ENCODE measurements at regions of chr9 and their contacts with region 1.

Region 1: GRCh38 chr9:123349691-123350480 is 6.1 kb upstream of the CRB2 start:
- DNase-seq: peak; percentile 55
- H3K4me3 Mint-ChIP-seq: no peak overlapping the region
- H3K27ac Mint-ChIP-seq: no peak overlapping the region
- H3K4me1 Mint-ChIP-seq: no peaks in the 10 kb centered on the region
- H3K27me3 Mint-ChIP-seq: peaks cover 12% of the 10 kb centered on the region

Region 2: GRCh38 chr9:122821278-122821943 is 528.5 kb before region 1 on chr9:
- intact Hi-C with region 1: no loop called
- DNase-seq: no peak
- H3K4me3 Mint-ChIP-seq: no peak overlapping the region
- H3K27ac Mint-ChIP-seq: no peak overlapping the region
- H3K4me1 Mint-ChIP-seq: peaks cover 52% of the 10 kb centered on the region
- H3K27me3 Mint-ChIP-seq: no peaks in the 10 kb centered on the region

Region 3: DNA sequence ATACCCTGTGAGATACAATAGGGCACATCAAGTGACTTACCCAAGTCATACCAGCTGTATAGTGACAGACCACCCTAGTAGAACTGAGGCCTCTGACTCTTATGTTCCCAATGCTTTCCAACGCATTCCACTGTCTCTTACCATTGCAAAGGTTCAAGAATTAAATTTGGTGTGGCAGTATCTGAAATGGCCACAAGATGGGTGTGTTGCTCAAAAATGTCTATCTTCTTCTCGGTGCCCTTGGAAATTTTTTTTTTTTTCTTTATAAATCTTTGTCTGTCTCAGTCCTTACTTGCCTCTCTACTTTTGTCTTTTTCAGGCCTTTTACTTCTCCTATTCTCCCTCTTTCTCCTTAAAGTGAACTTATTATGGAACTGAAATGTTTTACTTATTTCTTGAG is 268.1 kb before region 1 on chr9:
- intact Hi-C with region 1: loop called (anchors 1 kb)
- DNase-seq: no peak
- H3K4me3 Mint-ChIP-seq: no peak overlapping the region
- H3K27ac Mint-ChIP-seq: no peak overlapping the region
- H3K4me1 Mint-ChIP-seq: no peaks in the 10 kb centered on the region
- H3K27me3 Mint-ChIP-seq: no peaks in the 10 kb centered on the region

Region 4: DNA sequence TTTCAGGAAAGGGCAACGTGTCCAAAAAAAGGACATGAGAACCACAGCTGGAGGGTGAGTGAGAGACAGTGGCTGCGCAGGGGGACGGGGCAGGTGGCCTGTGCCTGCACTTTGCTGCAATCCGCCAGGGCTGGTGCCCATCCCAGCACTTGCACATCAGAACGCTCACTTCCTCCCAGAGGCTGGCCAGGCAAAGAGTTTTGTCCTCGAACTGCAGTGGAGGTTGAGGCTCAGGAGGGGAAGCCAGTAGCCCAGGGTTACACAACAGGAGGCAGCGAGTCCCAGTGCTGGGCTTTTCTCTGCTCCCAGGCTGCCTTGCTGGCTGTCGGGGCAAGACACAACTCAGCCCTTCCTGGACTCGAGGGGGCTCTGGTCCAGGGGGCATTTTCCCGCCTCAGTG is 39.2 kb after region 1 on chr9:
- intact Hi-C with region 1: loop called (anchors 1 kb)
- DNase-seq: no peak
- H3K4me3 Mint-ChIP-seq: no peak overlapping the region
- H3K27ac Mint-ChIP-seq: no peak overlapping the region
- H3K4me1 Mint-ChIP-seq: no peaks in the 10 kb centered on the region
- H3K27me3 Mint-ChIP-seq: no peaks in the 10 kb centered on the region

Region 5: GRCh38 chr9:123401879-123402513 is 52.1 kb after region 1 on chr9:
- intact Hi-C with region 1: no loop called
- DNase-seq: no peak
- H3K4me3 Mint-ChIP-seq: no peak overlapping the region
- H3K27ac Mint-ChIP-seq: no peak overlapping the region
- H3K4me1 Mint-ChIP-seq: no peaks in the 10 kb centered on the region
- H3K27me3 Mint-ChIP-seq: no peaks in the 10 kb centered on the region

Region 6: DNA sequence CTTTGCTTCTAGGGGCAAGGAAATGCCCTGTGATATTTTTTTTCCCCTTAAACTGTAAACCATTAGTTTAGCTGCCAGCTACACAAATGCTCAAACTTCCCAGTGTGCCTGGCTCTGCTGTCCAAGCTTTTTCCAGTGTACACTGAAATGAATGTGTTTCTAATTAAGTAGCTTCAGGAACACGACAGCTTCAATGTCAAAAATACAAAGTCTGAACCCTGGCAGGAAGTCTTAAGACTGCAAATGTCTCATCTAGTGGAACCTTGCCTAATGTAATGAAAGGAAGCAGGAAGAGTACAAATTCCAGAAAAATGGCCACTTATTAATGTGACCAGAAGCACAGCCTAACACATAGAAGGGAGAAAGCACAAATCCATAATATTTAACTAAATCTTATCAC is 261.3 kb after region 1 on chr9:
- intact Hi-C with region 1: no loop called
- DNase-seq: no peak
- H3K4me3 Mint-ChIP-seq: no peak overlapping the region
- H3K27ac Mint-ChIP-seq: no peak overlapping the region
- H3K4me1 Mint-ChIP-seq: no peaks in the 10 kb centered on the region
- H3K27me3 Mint-ChIP-seq: no peaks in the 10 kb centered on the region

Region 7: DNA sequence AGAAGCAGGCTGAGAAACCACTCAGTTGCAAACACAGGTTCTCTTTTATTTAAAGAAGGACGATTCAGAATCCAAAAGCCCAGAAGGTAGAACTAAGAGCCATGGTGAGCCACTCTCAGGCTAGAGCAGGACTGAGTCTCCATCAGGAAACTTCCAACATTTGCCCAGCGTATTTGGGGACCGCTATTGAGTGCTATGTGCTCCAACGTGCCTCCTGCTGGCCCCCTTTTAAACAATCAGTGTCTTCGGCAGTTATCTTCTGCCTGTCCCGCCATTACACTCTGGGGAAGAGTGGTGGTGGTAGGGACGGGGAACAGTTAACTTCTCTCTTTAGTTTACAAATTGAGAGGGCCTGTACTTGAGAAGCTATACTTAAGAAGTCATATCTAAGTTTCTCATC is 502.0 kb after region 1 on chr9:
- intact Hi-C with region 1: no loop called
- DNase-seq: no peak
- H3K4me3 Mint-ChIP-seq: no peak overlapping the region
- H3K27ac Mint-ChIP-seq: no peak overlapping the region
- H3K4me1 Mint-ChIP-seq: no peaks in the 10 kb centered on the region
- H3K27me3 Mint-ChIP-seq: no peaks in the 10 kb centered on the region